H1 (cell line): ENCODE measurements at regions of chr14 and their contacts with region 1.

Region 1: GRCh38 chr14:40436551-40436950 is 1004.3 kb upstream of the FBXO33 start:
- DNase-seq: no peak
- H3K4me3 ChIP-seq: no peak overlapping the region
- H3K27ac ChIP-seq: no peak overlapping the region
- H3K4me1 ChIP-seq: no peaks in the 10 kb centered on the region
- H3K27me3 ChIP-seq: no peaks in the 10 kb centered on the region
- CTCF ChIP-seq: no peak
- EP300 ChIP-seq: no peak
- POLR2A ChIP-seq: no peak
- RAD21 ChIP-seq: no peak

Region 2: GRCh38 chr14:40417777-40418401 is 18.7 kb before region 1 on chr14:
- CTCF ChIA-PET with region 1: interaction called, 13 read pairs
- POLR2A ChIA-PET with region 1: no interaction called
- DNase-seq: peak; percentile 17 to 62
- H3K4me3 ChIP-seq: no peak overlapping the region
- H3K27ac ChIP-seq: no peak overlapping the region
- H3K4me1 ChIP-seq: no peaks in the 10 kb centered on the region
- H3K27me3 ChIP-seq: no peaks in the 10 kb centered on the region
- CTCF ChIP-seq: peak; percentile 56 to 93 (median 74)
- EP300 ChIP-seq: no peak
- POLR2A ChIP-seq: no peak
- RAD21 ChIP-seq: peak; percentile 94 to 95